ENCODE measurements at regions of chr5 and their contacts with region 1.

Region 1: GRCh38 chr5:91383027-91383955 is at the start of gene ARRDC3:
- DNase-seq: peak; percentile 95 to 98 (median 98)
- ATAC-seq: peak; percentile 58
- H3K4me3 ChIP-seq: peak within 1 kb of the TSS; percentile 81
- H3K4me3 Mint-ChIP-seq: peak within 1 kb of the TSS; percentile 93 to 100 (median 98)
- H3K27ac ChIP-seq: peak within 1 kb of the TSS; percentile 97
- H3K27ac Mint-ChIP-seq: peak within 1 kb of the TSS; percentile 97 to 100 (median 98)
- H3K4me1 ChIP-seq: peaks cover 17 to 19% of the 10 kb centered on the region in 2 donors
- H3K4me1 Mint-ChIP-seq: peaks cover 6 to 32% (median 24%) of the 10 kb centered on the region in 7 donors
- H3K27me3 ChIP-seq: no peaks in the 10 kb centered on the region
- H3K27me3 Mint-ChIP-seq: no peaks in the 10 kb centered on the region
- total RNA-seq, gene ARRDC3: 29.8 to 256 (median 172) TPM

Region 2: DNA sequence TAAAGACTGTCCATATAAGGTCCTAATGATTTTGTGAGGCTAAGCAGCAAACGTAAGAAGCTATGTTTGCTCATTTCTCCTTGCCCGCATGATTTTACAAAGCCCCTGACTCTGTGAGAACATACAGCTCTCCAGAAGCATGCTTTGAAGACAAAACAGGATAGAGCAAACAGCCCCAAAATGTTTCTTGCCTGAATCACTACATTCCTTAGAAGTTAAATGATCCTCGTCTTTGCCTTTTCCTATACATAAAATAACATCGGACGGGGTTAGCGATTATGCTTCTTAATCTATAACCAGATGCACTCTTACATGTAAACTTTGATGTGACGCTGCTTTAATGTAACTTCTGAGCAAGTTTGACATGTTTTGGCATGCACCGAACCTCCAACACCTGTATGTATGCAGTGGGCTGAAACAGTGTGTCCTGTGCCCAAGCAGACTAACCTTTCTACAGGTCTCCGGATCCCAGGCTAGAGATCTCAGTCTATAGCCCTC is 1327.4 kb before region 1 on chr5:
- CTCF ChIA-PET with region 1: no interaction called
- POLR2A ChIA-PET with region 1: no interaction called
- intact Hi-C with region 1: no loop called
- DNase-seq: no peak
- ATAC-seq: no peak
- H3K4me3 ChIP-seq: no peak overlapping the region
- H3K4me3 Mint-ChIP-seq: no peak overlapping the region
- H3K27ac ChIP-seq: no peak overlapping the region
- H3K27ac Mint-ChIP-seq: no peak overlapping the region
- H3K4me1 ChIP-seq: no peaks in the 10 kb centered on the region
- H3K4me1 Mint-ChIP-seq: no peaks in the 10 kb centered on the region
- H3K27me3 ChIP-seq: no peaks in the 10 kb centered on the region
- H3K27me3 Mint-ChIP-seq: no peaks in the 10 kb centered on the region

Region 3: DNA sequence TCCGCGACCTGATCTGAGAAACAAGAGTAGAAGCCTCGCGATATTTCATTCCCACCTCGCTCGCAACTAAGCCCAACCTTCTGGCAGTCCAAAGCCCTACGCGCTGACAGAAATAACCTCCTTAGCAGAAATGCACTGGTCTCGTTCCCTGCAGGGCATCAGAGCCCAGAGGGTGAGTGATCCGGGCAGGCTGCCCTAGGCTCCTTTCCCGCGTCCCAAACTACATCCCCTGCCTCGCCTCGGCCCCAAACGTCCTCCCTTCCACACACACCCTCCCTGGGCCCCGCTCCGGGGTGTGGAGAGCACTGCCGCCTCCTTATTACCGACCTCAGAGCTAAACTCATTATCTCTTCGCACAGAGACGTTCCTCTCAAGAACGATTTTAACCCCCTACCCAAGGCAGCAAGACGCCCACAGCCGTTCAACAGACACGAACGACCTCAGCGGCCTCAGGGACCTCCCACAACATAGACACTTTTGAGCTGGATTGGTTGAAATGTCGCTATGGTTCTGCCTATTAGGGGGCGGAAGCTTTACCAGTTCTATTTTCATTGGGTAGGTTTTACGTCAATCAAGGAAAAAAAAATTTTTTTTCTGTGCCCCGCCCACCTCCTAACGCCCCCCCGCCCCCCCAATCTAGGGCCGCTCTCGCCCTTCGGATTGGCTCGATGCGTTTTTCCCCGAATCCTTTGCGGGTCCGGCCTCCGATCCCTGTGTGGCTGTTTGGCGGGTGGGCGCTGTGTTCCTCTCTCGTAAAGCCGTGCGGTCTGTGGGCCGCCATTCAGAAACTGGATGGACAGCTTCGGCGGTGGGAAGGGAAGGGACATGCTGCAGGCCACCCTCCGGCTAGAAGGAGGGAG is 973.7 kb before region 1 on chr5 and contains the start of gene CETN3:
- CTCF ChIA-PET with region 1: no interaction called
- POLR2A ChIA-PET with region 1: interaction called, 23 read pairs
- intact Hi-C with region 1: loop called (anchors 1 kb)
- DNase-seq: peak; percentile 72 to 93 (median 88)
- ATAC-seq: peak; percentile 94
- H3K4me3 ChIP-seq: peak within 1 kb of the TSS; percentile 100
- H3K4me3 Mint-ChIP-seq: no peak within 1 kb of the TSS
- H3K27ac ChIP-seq: peak within 1 kb of the TSS; percentile 93
- H3K27ac Mint-ChIP-seq: no peak within 1 kb of the TSS
- H3K4me1 ChIP-seq: peaks cover 7 to 13% of the 10 kb centered on the region in 2 donors
- H3K4me1 Mint-ChIP-seq: peaks cover 12 to 26% (median 16%) of the 10 kb centered on the region in 7 donors
- H3K27me3 ChIP-seq: no peaks in the 10 kb centered on the region
- H3K27me3 Mint-ChIP-seq: peaks cover 0 to 4% (median 0%) of the 10 kb centered on the region in 5 donors
- total RNA-seq, gene CETN3: 4.4 to 31.0 (median 22.1) TPM

Region 4: GRCh38 chr5:90873033-90873517 is 510.2 kb before region 1 on chr5:
- CTCF ChIA-PET with region 1: interaction called, 42 read pairs
- POLR2A ChIA-PET with region 1: interaction called, 27 read pairs
- intact Hi-C with region 1: no loop called
- DNase-seq: peak in 7 of 9 donors; percentile 43 to 77 (median 61)
- ATAC-seq: peak; percentile 75
- H3K4me3 ChIP-seq: no peak overlapping the region
- H3K4me3 Mint-ChIP-seq: peak overlapping the region in 9 of 10 donors; percentile 21 to 75 (median 55)
- H3K27ac ChIP-seq: peak overlapping the region; percentile 20
- H3K27ac Mint-ChIP-seq: peak overlapping the region in 8 of 9 donors; percentile 44 to 87 (median 72)
- H3K4me1 ChIP-seq: peaks cover 0 to 22% of the 10 kb centered on the region in 2 donors
- H3K4me1 Mint-ChIP-seq: peaks cover 6 to 49% (median 34%) of the 10 kb centered on the region in 7 donors
- H3K27me3 ChIP-seq: no peaks in the 10 kb centered on the region
- H3K27me3 Mint-ChIP-seq: peaks cover 0 to 41% (median 12%) of the 10 kb centered on the region in 5 donors

Region 5: DNA sequence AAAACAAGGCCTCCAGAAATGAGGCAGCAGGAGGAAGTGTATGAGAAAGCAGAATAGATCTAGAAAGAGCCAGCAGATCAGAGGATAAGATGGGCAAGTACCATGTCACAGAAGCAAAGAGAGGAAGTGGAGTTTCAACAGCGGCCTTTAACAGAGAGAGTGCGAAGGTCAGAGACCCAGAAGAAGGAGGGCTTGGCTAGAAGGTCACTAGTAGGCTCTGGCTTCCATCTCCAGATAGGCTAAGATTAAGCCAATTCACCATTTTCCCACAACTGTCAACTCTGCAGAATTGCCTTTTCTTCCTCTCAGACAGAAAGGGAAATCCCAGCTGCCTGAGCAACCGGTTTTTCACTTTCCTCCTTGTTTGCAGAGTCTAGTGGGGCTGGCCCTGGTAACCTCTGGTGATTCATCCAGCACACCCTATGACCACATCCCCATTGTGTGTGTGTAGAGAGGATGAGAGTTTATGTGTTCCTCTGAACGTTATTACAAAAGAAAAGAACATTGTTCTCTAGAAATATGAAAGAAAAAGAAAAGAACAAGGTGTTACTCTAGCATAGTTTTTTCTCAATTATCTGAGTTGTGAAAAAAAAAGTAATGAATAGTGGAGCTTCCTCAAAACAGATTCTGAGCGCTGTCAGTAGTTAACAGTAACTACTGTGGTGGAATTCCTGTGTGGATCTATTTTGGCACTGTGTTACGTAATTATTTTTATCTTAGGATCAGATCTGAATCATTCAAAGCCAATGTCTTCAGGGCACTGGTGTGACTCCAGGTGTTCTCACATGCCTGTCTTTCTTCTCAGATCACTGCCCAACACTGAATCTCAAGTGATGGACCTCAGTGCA is 220.5 kb before region 1 on chr5:
- CTCF ChIA-PET with region 1: no interaction called
- POLR2A ChIA-PET with region 1: no interaction called
- intact Hi-C with region 1: loop called in 1 of 2 experiments (anchors 1 kb)
- DNase-seq: peak in 2 of 9 donors; percentile 8 to 64
- ATAC-seq: peak; percentile 93
- H3K4me3 ChIP-seq: no peak overlapping the region
- H3K4me3 Mint-ChIP-seq: peak overlapping the region in 3 of 10 donors; percentile 0 to 46 (median 1)
- H3K27ac ChIP-seq: no peak overlapping the region
- H3K27ac Mint-ChIP-seq: peak overlapping the region in 4 of 9 donors; percentile 10 to 71 (median 35)
- H3K4me1 ChIP-seq: no peaks in the 10 kb centered on the region
- H3K4me1 Mint-ChIP-seq: peaks cover 5 to 24% (median 13%) of the 10 kb centered on the region in 7 donors
- H3K27me3 ChIP-seq: no peaks in the 10 kb centered on the region
- H3K27me3 Mint-ChIP-seq: no peaks in the 10 kb centered on the region

Region 6: DNA sequence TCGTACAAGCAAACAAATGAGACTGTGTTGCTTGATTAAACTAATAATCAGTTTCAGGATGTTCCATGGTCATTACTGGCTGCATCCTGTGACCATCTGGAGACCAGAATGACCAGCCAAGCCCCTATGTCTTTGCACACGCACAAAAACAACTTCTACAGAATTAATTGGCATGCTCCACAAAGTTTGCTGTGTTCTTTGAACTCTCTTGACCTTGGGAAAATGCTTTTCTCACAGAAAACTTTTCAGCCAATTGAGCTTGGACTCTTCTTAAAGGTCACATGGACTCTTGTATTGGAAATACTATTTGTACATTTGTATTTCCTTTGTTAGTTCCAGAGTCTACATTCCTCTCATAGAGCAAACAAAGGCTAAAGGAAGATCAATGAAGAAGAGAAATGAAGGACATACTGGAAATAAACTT is 148.0 kb before region 1 on chr5:
- CTCF ChIA-PET with region 1: interaction called, 8 read pairs
- POLR2A ChIA-PET with region 1: interaction called, 17 read pairs
- intact Hi-C with region 1: no loop called
- DNase-seq: no peak
- ATAC-seq: no peak
- H3K4me3 ChIP-seq: no peak overlapping the region
- H3K4me3 Mint-ChIP-seq: no peak overlapping the region
- H3K27ac ChIP-seq: no peak overlapping the region
- H3K27ac Mint-ChIP-seq: no peak overlapping the region
- H3K4me1 ChIP-seq: no peaks in the 10 kb centered on the region
- H3K4me1 Mint-ChIP-seq: no peaks in the 10 kb centered on the region
- H3K27me3 ChIP-seq: no peaks in the 10 kb centered on the region
- H3K27me3 Mint-ChIP-seq: peaks cover 0 to 6% (median 0%) of the 10 kb centered on the region in 5 donors

Region 7: GRCh38 chr5:91311697-91312501 is 71.4 kb before region 1 on chr5:
- CTCF ChIA-PET with region 1: interaction called, 16 read pairs
- POLR2A ChIA-PET with region 1: interaction called, 148 read pairs
- intact Hi-C with region 1: loop called (anchors 1 kb)
- DNase-seq: peak; percentile 17 to 81 (median 68)
- ATAC-seq: peak; percentile 86
- H3K4me3 ChIP-seq: peak overlapping the region; percentile 15
- H3K4me3 Mint-ChIP-seq: peak overlapping the region; percentile 59 to 82 (median 76)
- H3K27ac ChIP-seq: peak overlapping the region; percentile 53
- H3K27ac Mint-ChIP-seq: peak overlapping the region; percentile 84 to 98 (median 95)
- H3K4me1 ChIP-seq: peaks cover 33 to 39% of the 10 kb centered on the region in 2 donors
- H3K4me1 Mint-ChIP-seq: peaks cover 29 to 55% (median 48%) of the 10 kb centered on the region in 7 donors
- H3K27me3 ChIP-seq: no peaks in the 10 kb centered on the region
- H3K27me3 Mint-ChIP-seq: no peaks in the 10 kb centered on the region

Region 8: DNA sequence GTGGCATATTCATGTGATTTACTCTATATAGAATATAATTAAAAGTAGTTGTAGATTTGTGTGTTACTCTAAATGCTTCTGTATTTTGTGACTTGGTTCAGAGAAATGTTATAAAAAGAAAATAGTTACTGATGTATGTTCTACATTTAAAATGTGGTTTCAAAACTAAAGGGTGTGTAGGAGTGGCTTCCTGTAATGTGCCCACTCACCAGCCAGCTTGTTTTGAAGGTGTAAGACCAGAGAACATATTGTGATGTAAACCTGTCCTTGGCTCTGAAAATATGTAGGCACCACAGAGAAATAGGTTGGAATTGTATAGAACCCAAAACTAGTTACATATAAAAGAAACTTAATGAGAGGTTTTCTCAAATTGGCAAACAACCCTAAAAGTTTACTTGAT is 51.1 kb after region 1 on chr5:
- CTCF ChIA-PET with region 1: interaction called, 5 read pairs
- POLR2A ChIA-PET with region 1: interaction called, 13 read pairs
- intact Hi-C with region 1: no loop called
- DNase-seq: peak in 5 of 9 donors; percentile 13 to 58 (median 22)
- ATAC-seq: peak; percentile 76
- H3K4me3 ChIP-seq: no peak overlapping the region
- H3K4me3 Mint-ChIP-seq: peak overlapping the region in 8 of 10 donors; percentile 9 to 80 (median 66)
- H3K27ac ChIP-seq: peak overlapping the region; percentile 35
- H3K27ac Mint-ChIP-seq: peak overlapping the region in 8 of 9 donors; percentile 88 to 95 (median 90)
- H3K4me1 ChIP-seq: peaks cover 15 to 16% of the 10 kb centered on the region in 2 donors
- H3K4me1 Mint-ChIP-seq: peaks cover 9 to 56% (median 43%) of the 10 kb centered on the region in 7 donors
- H3K27me3 ChIP-seq: no peaks in the 10 kb centered on the region
- H3K27me3 Mint-ChIP-seq: no peaks in the 10 kb centered on the region

Region 9: GRCh38 chr5:91690921-91691320 is 307.6 kb after region 1 on chr5:
- CTCF ChIA-PET with region 1: no interaction called
- POLR2A ChIA-PET with region 1: no interaction called
- intact Hi-C with region 1: no loop called
- DNase-seq: no peak
- ATAC-seq: no peak
- H3K4me3 ChIP-seq: no peak overlapping the region
- H3K4me3 Mint-ChIP-seq: no peak overlapping the region
- H3K27ac ChIP-seq: no peak overlapping the region
- H3K27ac Mint-ChIP-seq: no peak overlapping the region
- H3K4me1 ChIP-seq: no peaks in the 10 kb centered on the region
- H3K4me1 Mint-ChIP-seq: no peaks in the 10 kb centered on the region
- H3K27me3 ChIP-seq: no peaks in the 10 kb centered on the region
- H3K27me3 Mint-ChIP-seq: no peaks in the 10 kb centered on the region

Region 10: DNA sequence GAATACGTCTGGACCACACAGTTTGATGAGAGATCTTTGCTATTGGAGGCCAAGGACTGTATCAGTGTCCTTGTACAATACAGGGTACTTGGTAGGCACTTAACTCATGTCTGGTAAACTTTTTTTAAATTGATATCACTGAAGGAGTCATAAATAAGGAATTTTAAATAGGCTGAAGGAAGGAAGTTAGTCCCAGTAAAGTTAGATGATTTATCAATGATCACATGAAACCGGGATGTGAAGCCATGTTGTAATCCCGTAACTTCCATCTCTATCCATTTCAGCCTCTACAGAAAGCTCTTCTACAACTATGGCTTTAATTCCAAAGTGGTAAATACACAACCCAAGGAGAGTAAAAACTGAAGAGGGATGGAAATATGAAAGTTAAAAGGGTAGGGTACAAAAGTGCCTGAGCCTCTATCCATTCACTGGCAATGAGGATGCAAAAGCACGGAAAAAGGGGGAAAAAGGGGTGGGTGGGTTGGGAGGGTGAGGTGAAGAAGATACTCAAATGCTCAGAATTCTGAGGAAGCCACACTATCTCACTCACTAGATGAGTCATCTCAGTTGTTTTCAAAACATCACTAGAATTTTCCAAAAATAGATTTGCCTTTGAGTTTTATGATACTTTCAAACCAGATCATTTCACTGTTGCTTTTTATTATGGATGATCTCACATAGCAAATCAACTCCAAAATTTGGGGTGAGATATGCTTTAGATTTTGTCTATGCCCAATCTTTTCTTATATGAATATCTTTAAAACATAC is 1144.2 kb after region 1 on chr5:
- CTCF ChIA-PET with region 1: no interaction called
- POLR2A ChIA-PET with region 1: no interaction called
- intact Hi-C with region 1: no loop called
- DNase-seq: no peak
- ATAC-seq: no peak
- H3K4me3 ChIP-seq: no peak overlapping the region
- H3K4me3 Mint-ChIP-seq: no peak overlapping the region
- H3K27ac ChIP-seq: no peak overlapping the region
- H3K27ac Mint-ChIP-seq: no peak overlapping the region
- H3K4me1 ChIP-seq: no peaks in the 10 kb centered on the region
- H3K4me1 Mint-ChIP-seq: no peaks in the 10 kb centered on the region
- H3K27me3 ChIP-seq: no peaks in the 10 kb centered on the region
- H3K27me3 Mint-ChIP-seq: no peaks in the 10 kb centered on the region